ENCODE measurements at regions of chr12 and their contacts with region 1.

Region 1: GRCh38 chr12:11656550-11656949 is 7.1 kb downstream of the ETV6 start:
- DNase-seq: no peak
- CTCF ChIP-seq: no peak

Region 2: GRCh38 chr12:11667171-11667570 is 10.6 kb after region 1 on chr12:
- CTCF ChIA-PET with region 1: interaction called, 14 read pairs
- POLR2A ChIA-PET with region 1: no interaction called
- DNase-seq: no peak
- CTCF ChIP-seq: no peak